ENCODE measurements at regions of chr4 and their contacts with region 1.

Region 1: DNA sequence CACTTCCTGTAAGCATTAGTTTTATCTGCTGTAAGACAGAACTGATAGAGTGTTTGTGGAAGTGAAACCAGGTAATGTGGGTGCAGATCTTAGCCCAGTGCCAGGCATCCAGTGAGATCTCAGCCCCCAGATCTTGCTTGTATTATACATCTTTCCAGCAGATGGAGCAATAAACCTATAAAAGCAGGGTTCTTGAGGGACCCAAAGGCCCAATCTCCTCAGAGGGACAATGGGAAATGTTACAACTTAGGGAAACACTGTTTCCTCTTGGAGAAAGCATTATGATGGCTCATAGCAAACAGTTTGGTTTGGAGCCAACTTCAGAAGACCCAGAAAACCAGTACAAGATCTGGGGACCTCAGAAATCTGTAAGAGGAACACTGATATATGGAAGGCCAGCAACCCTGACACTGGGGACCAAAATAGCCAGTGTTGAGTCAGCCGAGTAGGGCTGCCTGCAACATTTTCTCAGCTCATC is 206.3 kb downstream of the SLC7A11 start:
- DNase-seq: peak; percentile 79
- ATAC-seq: peak; percentile 85
- H3K4me3 ChIP-seq: no peak overlapping the region
- H3K27ac ChIP-seq: peak overlapping the region; percentile 91
- H3K4me1 ChIP-seq: peaks cover 14% of the 10 kb centered on the region
- H3K27me3 ChIP-seq: no peaks in the 10 kb centered on the region
- CTCF ChIP-seq: peak; percentile 75

Region 2: GRCh38 chr4:138053641-138054301 is 18.0 kb after region 1 on chr4:
- CTCF ChIA-PET with region 1: no interaction called
- POLR2A ChIA-PET with region 1: no interaction called
- intact Hi-C with region 1: loop called (anchors 2 kb)
- DNase-seq: peak; percentile 81
- ATAC-seq: peak; percentile 79
- H3K4me3 ChIP-seq: peak overlapping the region; percentile 67
- H3K27ac ChIP-seq: peak overlapping the region; percentile 94
- H3K4me1 ChIP-seq: peaks cover 41% of the 10 kb centered on the region
- H3K27me3 ChIP-seq: no peaks in the 10 kb centered on the region
- CTCF ChIP-seq: no peak

Region 3: DNA sequence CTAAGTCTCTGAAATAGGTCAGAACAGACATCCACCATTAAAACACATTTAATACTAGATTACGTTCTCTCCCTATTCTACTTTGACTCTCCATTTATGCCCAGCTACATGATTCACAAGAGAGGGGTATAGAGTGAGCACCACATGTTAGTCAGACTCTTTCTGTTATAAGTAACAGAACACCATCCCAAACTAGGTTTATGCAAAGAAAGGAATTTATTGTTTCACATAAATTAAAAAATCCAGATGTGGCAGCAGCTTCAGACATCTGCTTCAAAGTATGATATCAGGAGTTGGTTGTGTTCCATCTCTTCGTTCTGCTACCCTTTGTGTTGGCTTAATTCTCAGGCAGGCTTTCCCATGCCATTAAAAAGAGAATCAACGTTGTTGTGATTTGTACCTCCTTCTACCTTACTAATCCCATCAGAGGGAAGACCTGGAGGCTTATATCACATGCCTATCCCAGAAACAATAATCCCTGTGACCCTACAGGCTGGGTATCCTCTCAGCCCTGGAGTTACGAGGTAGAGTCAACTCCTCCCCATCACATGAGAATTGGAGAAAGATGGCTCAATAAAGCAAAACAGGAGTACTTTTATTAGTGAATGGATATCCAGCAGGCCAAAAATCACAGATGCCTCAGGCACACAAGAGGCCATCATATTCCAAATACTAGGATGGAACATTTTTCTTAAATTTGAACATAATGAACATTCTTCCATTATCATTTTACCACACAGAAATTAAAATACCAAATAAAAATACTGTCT is 43.1 kb after region 1 on chr4:
- CTCF ChIA-PET with region 1: no interaction called
- POLR2A ChIA-PET with region 1: no interaction called
- intact Hi-C with region 1: no loop called
- DNase-seq: no peak
- ATAC-seq: no peak
- H3K4me3 ChIP-seq: no peak overlapping the region
- H3K27ac ChIP-seq: no peak overlapping the region
- H3K4me1 ChIP-seq: no peaks in the 10 kb centered on the region
- H3K27me3 ChIP-seq: no peaks in the 10 kb centered on the region
- CTCF ChIP-seq: no peak

Region 4: DNA sequence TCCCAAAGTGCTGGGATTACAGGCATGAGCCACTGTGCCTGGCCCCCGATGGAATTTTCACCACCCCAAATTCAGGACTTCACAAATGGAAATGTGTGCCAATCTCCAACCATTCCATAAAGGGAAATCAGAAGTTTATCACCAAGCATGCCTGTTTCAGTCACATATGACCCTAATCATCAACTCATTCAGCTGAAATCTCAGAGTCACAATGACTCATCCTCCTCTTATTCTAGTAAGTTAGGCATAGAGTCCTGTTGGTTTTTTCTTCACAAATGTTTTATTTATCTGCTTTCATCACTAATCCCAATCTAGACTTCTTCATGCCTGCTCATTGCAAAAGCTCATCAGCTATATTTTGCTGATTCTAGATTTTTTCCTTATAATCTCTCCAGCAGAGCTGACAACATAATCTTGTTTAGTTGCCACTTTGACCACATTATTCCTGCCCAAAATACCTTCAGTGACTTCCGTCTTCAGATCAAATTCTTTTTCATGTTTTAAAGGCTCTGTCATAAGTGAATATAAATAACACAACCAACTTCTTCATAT is 123.0 kb after region 1 on chr4:
- CTCF ChIA-PET with region 1: no interaction called
- POLR2A ChIA-PET with region 1: no interaction called
- intact Hi-C with region 1: loop called (anchors 10 kb)
- DNase-seq: peak; percentile 58
- ATAC-seq: peak; percentile 62
- H3K4me3 ChIP-seq: no peak overlapping the region
- H3K27ac ChIP-seq: no peak overlapping the region
- H3K4me1 ChIP-seq: peaks cover 6% of the 10 kb centered on the region; the same call in 1 of the 2 replicates
- H3K27me3 ChIP-seq: no peaks in the 10 kb centered on the region
- CTCF ChIP-seq: no peak

Region 5: GRCh38 chr4:138522366-138522765 is 486.5 kb after region 1 on chr4:
- CTCF ChIA-PET with region 1: no interaction called
- POLR2A ChIA-PET with region 1: no interaction called
- intact Hi-C with region 1: loop called (anchors 2 kb)
- DNase-seq: peak; percentile 61
- ATAC-seq: peak; percentile 79
- H3K4me3 ChIP-seq: no peak overlapping the region
- H3K27ac ChIP-seq: no peak overlapping the region
- H3K4me1 ChIP-seq: no peaks in the 10 kb centered on the region
- H3K27me3 ChIP-seq: no peaks in the 10 kb centered on the region
- CTCF ChIP-seq: peak; percentile 65

Region 6: GRCh38 chr4:138680989-138681604 is 645.3 kb after region 1 on chr4:
- CTCF ChIA-PET with region 1: interaction called, 3 read pairs
- POLR2A ChIA-PET with region 1: no interaction called
- intact Hi-C with region 1: loop called (anchors 2 kb)
- DNase-seq: peak; percentile 80
- ATAC-seq: peak; percentile 59
- H3K4me3 ChIP-seq: peak overlapping the region; percentile 34; the same call in 1 of the 2 replicates
- H3K27ac ChIP-seq: peak overlapping the region; percentile 90
- H3K4me1 ChIP-seq: peaks cover 9% of the 10 kb centered on the region
- H3K27me3 ChIP-seq: no peaks in the 10 kb centered on the region
- CTCF ChIP-seq: peak; percentile 86